Heart right ventricle (tissue), 16 donors: ENCODE measurements at regions of chr11 and their contacts with region 1.

Region 1: DNA sequence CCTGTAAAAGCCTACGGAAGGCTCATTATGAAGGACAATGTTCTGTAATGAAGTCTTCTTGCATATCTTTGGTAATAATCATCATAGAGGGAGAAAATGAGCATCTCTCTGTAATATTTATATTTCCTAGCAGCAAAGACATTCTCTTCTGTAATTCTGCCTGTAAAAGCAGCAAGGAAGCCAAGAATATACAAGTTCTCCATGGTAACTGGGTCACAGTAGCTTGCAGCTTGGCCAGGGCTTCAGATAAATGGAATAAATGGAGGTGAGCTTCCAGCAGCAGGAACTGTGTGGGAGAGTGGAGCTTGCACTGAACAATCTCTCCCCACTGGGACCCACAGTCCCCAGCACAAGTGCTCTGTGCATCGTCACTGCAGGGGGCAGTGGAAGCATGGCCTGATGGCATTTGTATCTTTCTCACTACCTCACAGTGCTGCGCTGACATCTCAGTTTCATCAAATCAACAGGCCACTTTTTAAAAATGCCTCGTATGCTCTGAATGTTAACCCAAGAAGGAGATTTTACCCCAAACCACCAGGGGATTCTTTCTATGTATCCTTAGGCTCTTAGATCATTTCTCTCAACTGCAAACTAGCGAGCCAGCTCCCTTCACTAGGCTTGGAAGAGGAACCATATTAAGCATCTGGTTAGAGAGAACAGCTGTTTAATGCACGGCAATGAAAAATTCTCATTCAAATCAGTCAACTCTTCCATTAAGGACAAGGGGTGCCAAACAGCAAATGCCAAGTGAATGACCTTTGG is 1059.7 kb downstream of the OPCML start:
- DNase-seq: peak in 1 of 2 donors; percentile 19
- ATAC-seq: peak in 6 of 8 donors; percentile 28 to 80 (median 50)
- H3K4me3 ChIP-seq: no peak overlapping the region
- H3K27ac ChIP-seq: no peak overlapping the region
- H3K4me1 ChIP-seq: peaks cover 0 to 15% (median 0%) of the 10 kb centered on the region in 9 donors
- H3K27me3 ChIP-seq: peaks cover 0 to 19% (median 0%) of the 10 kb centered on the region in 7 donors
- CTCF ChIP-seq: peak in 3 of 9 donors; percentile 11 to 40 (median 19)

Region 2: GRCh38 chr11:132848336-132848735 is 375.7 kb after region 1 on chr11:
- intact Hi-C with region 1: no loop called
- DNase-seq: no peak
- ATAC-seq: no peak
- H3K4me3 ChIP-seq: no peak overlapping the region
- H3K27ac ChIP-seq: no peak overlapping the region
- H3K4me1 ChIP-seq: peaks cover 0 to 4% (median 0%) of the 10 kb centered on the region in 9 donors
- H3K27me3 ChIP-seq: peaks cover 0 to 8% (median 0%) of the 10 kb centered on the region in 7 donors
- CTCF ChIP-seq: no peak

Region 3: GRCh38 chr11:132941024-132941646 is 468.5 kb after region 1 on chr11:
- intact Hi-C with region 1: loop called in 2 of 10 experiments (anchors 10 kb)
- DNase-seq: peak in 1 of 2 donors; percentile 22
- ATAC-seq: peak in 1 of 8 donors; percentile 23
- H3K4me3 ChIP-seq: no peak overlapping the region
- H3K27ac ChIP-seq: no peak overlapping the region
- H3K4me1 ChIP-seq: peaks cover 0 to 7% (median 4%) of the 10 kb centered on the region in 9 donors
- H3K27me3 ChIP-seq: peaks cover 14 to 51% (median 45%) of the 10 kb centered on the region in 7 donors
- CTCF ChIP-seq: peak; percentile 58 to 88 (median 80)